B cell (primary cell): ENCODE measurements at regions of chr7 and their contacts with region 1.

Region 1: GRCh38 chr7:66493235-66494181 is 135.2 kb upstream of the KCTD7 start:
- DNase-seq: peak; percentile 99
- ATAC-seq: peak; percentile 91
- H3K4me3 ChIP-seq: peak overlapping the region; percentile 75 to 92 (median 85)
- H3K4me3 Mint-ChIP-seq: peak overlapping the region; percentile 94
- H3K27ac ChIP-seq: peak overlapping the region; percentile 92 to 97
- H3K27ac Mint-ChIP-seq: peak overlapping the region; percentile 97
- H3K4me1 ChIP-seq: peaks cover 6 to 13% of the 10 kb centered on the region in 2 donors
- H3K4me1 Mint-ChIP-seq: peaks cover 26% of the 10 kb centered on the region
- H3K27me3 ChIP-seq: no peaks in the 10 kb centered on the region
- H3K27me3 Mint-ChIP-seq: no peaks in the 10 kb centered on the region
- CTCF ChIP-seq: no peak

Region 2: DNA sequence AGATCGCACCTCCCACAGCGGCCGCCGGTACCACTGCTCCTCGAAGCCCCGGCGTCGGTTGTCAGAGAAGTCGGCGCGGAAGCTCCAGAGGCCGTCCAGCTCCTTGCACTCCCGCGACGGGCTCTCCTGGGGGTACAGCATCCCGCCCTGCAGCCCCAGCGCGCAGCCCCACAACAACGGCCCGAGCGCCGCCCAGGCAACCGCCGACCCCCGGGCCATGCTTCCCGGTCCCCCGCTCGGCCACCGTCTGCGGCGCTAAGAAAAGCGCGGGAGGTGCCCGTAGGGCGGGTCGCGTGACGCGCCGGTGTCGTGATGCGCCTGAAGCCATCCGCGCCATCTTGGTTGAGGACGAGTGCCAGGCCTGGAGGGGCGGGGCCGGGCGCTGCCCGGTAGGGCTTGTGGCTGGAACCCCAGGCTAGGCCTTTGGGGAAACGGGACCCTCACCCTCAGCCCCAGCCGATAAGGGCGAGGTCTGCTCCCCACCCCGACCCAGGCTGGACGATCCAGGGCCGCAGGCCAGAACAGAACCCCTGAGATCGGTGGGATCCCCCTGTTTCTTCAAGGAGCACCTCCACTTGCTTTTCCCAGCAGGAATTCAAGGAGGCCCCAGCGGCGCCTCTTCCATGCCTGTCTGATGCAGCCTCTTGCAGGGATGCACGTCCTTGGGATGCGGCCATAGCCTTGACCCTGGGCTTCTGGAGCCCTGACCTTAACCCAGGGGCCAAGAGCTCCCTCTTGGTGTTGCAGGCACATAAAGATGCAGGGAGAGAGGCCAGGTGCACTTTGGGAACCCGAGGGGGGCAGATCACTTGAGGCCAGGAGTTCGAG is 511.3 kb before region 1 on chr7 and contains the start of gene GUSB:
- CTCF ChIA-PET with region 1: no interaction called
- POLR2A ChIA-PET with region 1: no interaction called
- intact Hi-C with region 1: loop called (anchors 1 kb)
- DNase-seq: peak; percentile 91
- ATAC-seq: peak; percentile 95
- H3K4me3 ChIP-seq: peak within 1 kb of the TSS; percentile 15 to 89 (median 85)
- H3K4me3 Mint-ChIP-seq: peak within 1 kb of the TSS; percentile 87
- H3K27ac ChIP-seq: peak within 1 kb of the TSS; percentile 34 to 73
- H3K27ac Mint-ChIP-seq: peak within 1 kb of the TSS; percentile 84
- H3K4me1 ChIP-seq: peaks cover 14 to 26% of the 10 kb centered on the region in 2 donors
- H3K4me1 Mint-ChIP-seq: peaks cover 19% of the 10 kb centered on the region
- H3K27me3 ChIP-seq: no peaks in the 10 kb centered on the region
- H3K27me3 Mint-ChIP-seq: no peaks in the 10 kb centered on the region
- CTCF ChIP-seq: no peak
- total RNA-seq, gene GUSB: 65.4 and 66.4 TPM in 2 replicates

Region 3: GRCh38 chr7:66413379-66414114 is 80.0 kb before region 1 on chr7:
- CTCF ChIA-PET with region 1: interaction called, 3 read pairs
- POLR2A ChIA-PET with region 1: interaction called, 4 read pairs
- intact Hi-C with region 1: loop called (anchors 1 kb)
- DNase-seq: peak; percentile 91
- ATAC-seq: peak; percentile 76
- H3K4me3 ChIP-seq: peak overlapping the region; percentile 0 to 66 (median 57)
- H3K4me3 Mint-ChIP-seq: peak overlapping the region; percentile 81
- H3K27ac ChIP-seq: no peak overlapping the region
- H3K27ac Mint-ChIP-seq: peak overlapping the region; percentile 65
- H3K4me1 ChIP-seq: peaks cover 8 to 16% of the 10 kb centered on the region in 2 donors
- H3K4me1 Mint-ChIP-seq: peaks cover 15% of the 10 kb centered on the region
- H3K27me3 ChIP-seq: no peaks in the 10 kb centered on the region
- H3K27me3 Mint-ChIP-seq: no peaks in the 10 kb centered on the region
- CTCF ChIP-seq: peak; percentile 38

Region 4: GRCh38 chr7:66452165-66452564 is 41.3 kb before region 1 on chr7:
- CTCF ChIA-PET with region 1: no interaction called
- POLR2A ChIA-PET with region 1: no interaction called
- intact Hi-C with region 1: no loop called
- DNase-seq: no peak
- ATAC-seq: no peak
- H3K4me3 ChIP-seq: no peak overlapping the region
- H3K4me3 Mint-ChIP-seq: no peak overlapping the region
- H3K27ac ChIP-seq: no peak overlapping the region
- H3K27ac Mint-ChIP-seq: no peak overlapping the region
- H3K4me1 ChIP-seq: peaks cover 11 to 19% of the 10 kb centered on the region in 2 donors
- H3K4me1 Mint-ChIP-seq: peaks cover 25% of the 10 kb centered on the region
- H3K27me3 ChIP-seq: no peaks in the 10 kb centered on the region
- H3K27me3 Mint-ChIP-seq: no peaks in the 10 kb centered on the region
- CTCF ChIP-seq: no peak

Region 5: DNA sequence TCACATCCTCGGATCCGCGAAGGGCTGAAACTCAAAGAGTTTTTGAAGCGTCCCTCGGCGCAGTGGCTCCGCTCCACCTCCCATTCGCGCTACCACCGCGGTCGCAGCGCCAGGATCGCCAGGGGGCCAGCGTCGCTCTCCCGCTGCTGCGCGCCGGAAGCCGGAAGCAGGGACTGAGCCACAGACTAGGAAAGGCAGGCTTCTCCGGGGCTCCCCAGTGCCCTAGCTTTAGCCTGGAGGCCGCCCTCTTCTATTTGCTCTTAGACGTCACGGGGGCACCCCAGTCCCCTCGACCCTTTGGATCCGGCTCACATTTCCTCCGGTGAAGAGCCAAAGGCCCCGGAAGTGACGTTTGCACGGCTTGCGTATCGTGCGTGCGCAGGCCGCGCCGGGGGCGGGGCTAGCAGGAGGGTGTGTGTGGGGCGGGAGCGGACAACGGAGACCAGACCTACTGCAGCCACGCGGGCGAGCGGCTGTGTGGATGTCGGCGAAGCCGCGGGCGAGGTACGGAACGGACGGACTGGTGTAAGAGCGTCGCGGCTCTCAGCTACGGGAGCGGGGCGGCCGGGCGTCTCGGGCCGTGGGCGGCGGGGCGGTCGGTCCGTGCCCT is 160.7 kb after region 1 on chr7:
- CTCF ChIA-PET with region 1: no interaction called
- POLR2A ChIA-PET with region 1: interaction called, 3 read pairs
- intact Hi-C with region 1: loop called (anchors 1 kb)
- DNase-seq: peak; percentile 99
- ATAC-seq: peak; percentile 92
- H3K4me3 ChIP-seq: peak overlapping the region; percentile 54 to 86 (median 83)
- H3K4me3 Mint-ChIP-seq: peak overlapping the region; percentile 98
- H3K27ac ChIP-seq: peak overlapping the region; percentile 82 to 98
- H3K27ac Mint-ChIP-seq: peak overlapping the region; percentile 99
- H3K4me1 ChIP-seq: peaks cover 9 to 16% of the 10 kb centered on the region in 2 donors
- H3K4me1 Mint-ChIP-seq: peaks cover 24% of the 10 kb centered on the region
- H3K27me3 ChIP-seq: no peaks in the 10 kb centered on the region
- H3K27me3 Mint-ChIP-seq: no peaks in the 10 kb centered on the region
- CTCF ChIP-seq: no peak

Region 6: DNA sequence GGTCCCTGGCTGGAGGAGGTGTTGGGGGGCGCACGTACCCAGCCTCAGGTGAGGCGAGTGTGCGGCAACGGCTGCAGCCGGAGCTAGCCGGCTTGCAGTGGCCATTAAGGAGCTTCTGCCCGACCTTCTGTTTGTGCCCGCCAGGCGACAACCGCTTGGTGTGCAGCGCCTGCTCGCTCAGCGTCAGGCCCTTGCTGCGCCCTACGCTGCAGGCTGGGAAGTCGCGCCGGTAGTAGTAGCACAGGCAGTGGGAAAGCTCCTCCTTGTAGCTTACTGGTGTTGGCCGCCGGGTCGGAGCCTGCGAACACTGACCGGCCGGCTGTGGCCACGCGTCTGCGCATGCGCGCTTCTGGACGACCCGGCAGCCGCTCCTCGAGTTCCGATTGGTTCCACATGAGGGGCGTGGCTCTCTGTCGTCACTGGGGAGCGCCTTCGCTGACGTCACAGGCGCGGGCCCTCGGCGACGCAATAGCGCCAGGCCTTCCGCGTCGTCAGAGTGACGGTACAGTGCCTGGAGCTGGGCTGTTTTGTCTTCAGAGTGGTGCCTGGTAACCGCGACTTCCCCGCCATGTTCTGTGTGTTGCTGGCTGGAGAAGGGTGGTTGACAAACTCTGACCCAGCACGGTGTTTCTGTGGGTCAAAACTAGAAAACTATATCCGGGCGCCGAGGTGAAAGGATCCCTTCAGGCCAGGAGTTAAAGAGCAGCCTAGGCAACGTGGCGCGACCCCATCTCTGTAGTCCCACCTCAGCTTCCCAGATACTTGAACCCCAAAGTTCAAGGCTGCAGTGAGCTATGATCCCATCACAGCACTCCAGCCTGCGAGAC is 351.3 kb after region 1 on chr7:
- CTCF ChIA-PET with region 1: no interaction called
- POLR2A ChIA-PET with region 1: interaction called, 14 read pairs
- intact Hi-C with region 1: no loop called
- DNase-seq: peak; percentile 100
- ATAC-seq: peak; percentile 91
- H3K4me3 ChIP-seq: peak overlapping the region; percentile 72 to 93 (median 89)
- H3K4me3 Mint-ChIP-seq: peak overlapping the region; percentile 95
- H3K27ac ChIP-seq: peak overlapping the region; percentile 89 to 100
- H3K27ac Mint-ChIP-seq: peak overlapping the region; percentile 100
- H3K4me1 ChIP-seq: peaks cover 13 to 16% of the 10 kb centered on the region in 2 donors
- H3K4me1 Mint-ChIP-seq: peaks cover 23% of the 10 kb centered on the region
- H3K27me3 ChIP-seq: no peaks in the 10 kb centered on the region
- H3K27me3 Mint-ChIP-seq: no peaks in the 10 kb centered on the region
- CTCF ChIP-seq: peak; percentile 60